ENCODE measurements at regions of chr2 and their contacts with region 1.

Region 1: DNA sequence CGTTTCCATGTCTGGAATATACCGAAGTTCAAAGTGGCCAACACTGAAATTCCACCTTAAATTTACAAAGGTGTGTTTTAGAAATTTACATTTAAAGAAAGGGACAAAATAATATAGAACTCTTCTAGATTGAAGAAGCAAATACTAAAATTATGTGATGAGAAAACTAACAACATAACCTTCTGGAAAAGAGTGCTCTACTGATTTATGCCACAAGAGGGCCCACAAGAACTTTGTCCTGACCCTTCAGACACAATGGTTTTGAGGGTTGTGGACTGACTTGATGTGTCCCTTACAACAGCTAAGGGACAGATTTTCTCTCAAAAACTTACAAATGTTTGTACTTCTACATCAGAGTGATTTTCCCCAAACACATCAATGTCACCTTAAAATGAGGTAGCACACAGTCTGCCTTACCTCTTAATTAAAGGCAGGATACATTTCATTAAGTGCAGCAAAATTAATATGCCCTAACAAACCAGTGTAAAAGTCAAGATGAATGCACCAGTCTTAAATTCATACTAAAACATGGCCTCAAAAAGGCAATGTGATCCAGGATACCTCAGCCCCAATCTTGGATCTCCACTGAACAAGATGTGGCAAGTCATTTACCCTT is 36.2 kb downstream of the EIF2AK3 start:
- DNase-seq: no peak
- ATAC-seq: peak; percentile 80 to 95 (median 86)
- H3K4me3 ChIP-seq: no peak overlapping the region
- H3K27ac ChIP-seq: no peak overlapping the region
- H3K4me1 ChIP-seq: no peaks in the 10 kb centered on the region
- H3K27me3 ChIP-seq: no peaks in the 10 kb centered on the region
- CTCF ChIP-seq: peak; percentile 86

Region 2: DNA sequence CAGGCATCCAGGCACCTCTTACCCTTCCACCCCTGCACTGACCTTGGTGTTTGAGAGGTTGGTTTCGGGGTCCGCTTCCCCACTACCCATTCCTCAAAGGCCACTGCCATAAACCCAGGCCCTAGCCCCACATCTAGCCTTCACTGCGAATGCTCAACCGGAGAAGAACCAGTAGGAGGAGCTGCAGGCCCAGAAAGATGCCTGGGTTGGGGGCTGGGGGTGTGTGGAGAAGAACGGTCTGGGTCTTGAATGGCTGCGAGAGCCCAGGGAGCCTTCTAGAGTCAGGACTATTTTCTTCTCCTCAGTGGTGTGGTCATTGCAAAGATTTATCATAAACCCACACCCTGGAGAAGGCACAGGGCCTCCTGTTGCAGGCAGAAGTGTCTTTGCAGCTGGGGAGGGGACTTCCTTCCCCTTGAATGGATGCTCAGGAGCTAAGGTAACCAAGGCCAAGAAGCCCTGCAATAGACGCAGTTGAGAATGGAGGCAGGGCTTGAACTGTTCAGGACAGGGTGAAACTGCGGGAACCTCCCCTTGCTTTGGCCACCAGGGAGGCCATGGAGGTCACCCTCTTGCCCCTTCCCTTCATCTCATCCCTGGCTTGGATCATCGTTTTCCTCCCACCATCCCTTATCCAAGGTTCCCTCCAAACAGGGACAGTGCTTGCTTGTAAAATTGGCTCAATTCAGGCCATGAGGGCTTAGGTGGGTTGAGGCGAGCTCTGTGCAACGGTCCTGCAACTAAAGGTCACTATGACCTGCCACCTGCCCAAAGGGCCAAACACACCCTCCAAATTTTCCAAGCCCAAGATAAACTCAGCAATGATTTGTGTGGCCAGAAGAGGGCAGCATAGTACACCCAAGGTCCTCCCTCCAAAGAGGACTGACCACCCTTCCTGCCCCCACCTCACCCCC is 400.0 kb before region 1 on chr2:
- intact Hi-C with region 1: no loop called
- DNase-seq: no peak
- ATAC-seq: peak in 3 of 4 donors; percentile 44 to 55 (median 54)
- H3K4me3 ChIP-seq: no peak overlapping the region
- H3K27ac ChIP-seq: no peak overlapping the region
- H3K4me1 ChIP-seq: no peaks in the 10 kb centered on the region
- H3K27me3 ChIP-seq: no peaks in the 10 kb centered on the region
- CTCF ChIP-seq: peak; percentile 43

Region 3: DNA sequence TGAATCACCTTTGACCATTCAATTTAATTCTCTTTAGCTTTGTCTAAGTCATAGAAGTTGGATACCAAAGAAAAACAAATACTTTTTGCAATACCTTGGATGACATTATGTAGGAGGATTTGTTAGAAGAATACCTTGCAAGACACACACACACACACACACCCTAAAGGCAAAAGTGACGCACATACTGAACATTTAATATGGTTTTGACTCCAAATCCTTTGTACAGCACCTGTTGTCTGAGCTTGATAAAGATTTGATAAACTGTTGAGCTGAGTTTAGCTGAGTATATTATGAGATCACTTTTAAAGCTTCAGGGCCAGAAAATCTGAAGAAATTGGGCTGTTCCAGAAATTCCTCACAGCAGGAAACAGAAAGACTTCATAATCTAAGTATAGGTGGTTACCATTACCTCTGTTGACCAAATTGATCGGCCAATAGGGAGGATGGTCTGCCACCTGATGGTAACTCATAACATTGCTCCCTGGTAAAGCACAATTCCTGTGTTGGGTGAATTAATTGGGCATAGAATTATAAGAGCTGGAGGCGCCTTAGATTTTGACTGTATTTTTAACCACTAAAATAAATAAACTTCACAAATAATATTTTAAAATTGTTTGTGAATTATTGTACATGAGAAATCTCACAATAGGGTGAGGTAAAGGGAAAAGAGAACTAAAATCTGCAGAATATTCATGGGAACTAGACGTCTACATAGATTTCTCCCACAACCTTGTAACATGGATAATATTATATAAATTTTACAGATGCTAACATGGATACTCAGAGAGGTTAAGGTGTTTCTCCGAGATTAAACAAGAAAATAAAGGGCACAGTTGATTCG is 78.5 kb after region 1 on chr2:
- intact Hi-C with region 1: loop called (anchors 1 to 2 kb)
- DNase-seq: no peak
- ATAC-seq: peak; percentile 85 to 94 (median 90)
- H3K4me3 ChIP-seq: no peak overlapping the region
- H3K27ac ChIP-seq: peak overlapping the region; percentile 56
- H3K4me1 ChIP-seq: peaks cover 9% of the 10 kb centered on the region
- H3K27me3 ChIP-seq: no peaks in the 10 kb centered on the region
- CTCF ChIP-seq: peak; percentile 67